Activated naive CD4-positive, alpha-beta T cell treated with anti-CD3 and anti-CD28 coated beads for 36 hours (primary cell): ENCODE measurements at regions of chr16 and their contacts with region 1.

Region 1: GRCh38 chr16:72093448-72094265 is at the starts of genes DHX38 and TXNL4B:
- DNase-seq: peak; percentile 96
- H3K4me3 Mint-ChIP-seq: peak within 1 kb of the TSS; percentile 96
- H3K27ac Mint-ChIP-seq: peak within 1 kb of the TSS; percentile 95
- H3K4me1 Mint-ChIP-seq: peaks cover 35% of the 10 kb centered on the region
- H3K27me3 Mint-ChIP-seq: no peaks in the 10 kb centered on the region
- total RNA-seq, gene DHX38: 78.6 to 79.9 TPM
- total RNA-seq, gene TXNL4B: 22.0 to 24.1 TPM

Region 2: DNA sequence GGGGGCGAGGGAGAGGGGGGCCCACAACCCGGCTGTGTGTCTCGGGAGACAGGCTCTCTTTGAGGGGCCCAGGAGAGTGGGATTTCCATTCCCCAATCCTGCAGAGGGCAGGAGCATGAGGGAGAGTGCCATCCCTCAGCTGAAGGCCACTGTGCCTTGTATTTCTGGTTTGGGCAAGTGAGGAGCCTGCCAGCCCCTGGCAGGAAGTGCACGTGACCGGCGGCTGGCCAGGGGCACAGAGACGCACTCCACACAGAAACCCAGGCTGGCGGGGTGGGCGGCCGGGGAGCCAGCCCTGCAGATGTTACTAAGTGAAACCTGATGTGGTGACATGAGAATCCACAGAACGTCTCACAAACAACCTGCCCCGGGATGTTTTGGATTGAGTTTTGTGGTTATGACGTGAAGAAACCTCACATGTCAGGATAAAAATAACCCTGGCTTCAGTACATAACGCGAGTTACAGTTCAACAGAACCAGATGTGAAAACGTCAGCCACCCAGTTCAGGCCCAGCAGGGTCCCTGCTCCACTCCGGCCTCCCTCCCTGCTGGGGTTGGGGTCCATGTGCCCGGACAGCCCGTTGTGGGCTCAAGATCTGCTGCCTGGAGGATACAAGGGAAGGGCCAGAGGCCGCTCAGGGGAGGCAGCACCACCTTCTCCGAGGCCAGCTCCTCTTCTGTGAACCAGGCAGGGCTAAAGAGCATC is 1356.1 kb before region 1 on chr16:
- CTCF ChIA-PET with region 1: no interaction called
- intact Hi-C with region 1: loop called (anchors 10 kb)
- DNase-seq: peak; percentile 87
- H3K4me3 Mint-ChIP-seq: peak overlapping the region; percentile 55
- H3K27ac Mint-ChIP-seq: peak overlapping the region; percentile 93
- H3K4me1 Mint-ChIP-seq: peaks cover 66% of the 10 kb centered on the region
- H3K27me3 Mint-ChIP-seq: no peaks in the 10 kb centered on the region

Region 3: GRCh38 chr16:71484006-71484893 is 609.4 kb before region 1 on chr16:
- CTCF ChIA-PET with region 1: no interaction called
- intact Hi-C with region 1: loop called (anchors 5 kb)
- DNase-seq: peak; percentile 90
- H3K4me3 Mint-ChIP-seq: peak overlapping the region; percentile 74
- H3K27ac Mint-ChIP-seq: peak overlapping the region; percentile 79
- H3K4me1 Mint-ChIP-seq: peaks cover 13% of the 10 kb centered on the region
- H3K27me3 Mint-ChIP-seq: no peaks in the 10 kb centered on the region

Region 4: DNA sequence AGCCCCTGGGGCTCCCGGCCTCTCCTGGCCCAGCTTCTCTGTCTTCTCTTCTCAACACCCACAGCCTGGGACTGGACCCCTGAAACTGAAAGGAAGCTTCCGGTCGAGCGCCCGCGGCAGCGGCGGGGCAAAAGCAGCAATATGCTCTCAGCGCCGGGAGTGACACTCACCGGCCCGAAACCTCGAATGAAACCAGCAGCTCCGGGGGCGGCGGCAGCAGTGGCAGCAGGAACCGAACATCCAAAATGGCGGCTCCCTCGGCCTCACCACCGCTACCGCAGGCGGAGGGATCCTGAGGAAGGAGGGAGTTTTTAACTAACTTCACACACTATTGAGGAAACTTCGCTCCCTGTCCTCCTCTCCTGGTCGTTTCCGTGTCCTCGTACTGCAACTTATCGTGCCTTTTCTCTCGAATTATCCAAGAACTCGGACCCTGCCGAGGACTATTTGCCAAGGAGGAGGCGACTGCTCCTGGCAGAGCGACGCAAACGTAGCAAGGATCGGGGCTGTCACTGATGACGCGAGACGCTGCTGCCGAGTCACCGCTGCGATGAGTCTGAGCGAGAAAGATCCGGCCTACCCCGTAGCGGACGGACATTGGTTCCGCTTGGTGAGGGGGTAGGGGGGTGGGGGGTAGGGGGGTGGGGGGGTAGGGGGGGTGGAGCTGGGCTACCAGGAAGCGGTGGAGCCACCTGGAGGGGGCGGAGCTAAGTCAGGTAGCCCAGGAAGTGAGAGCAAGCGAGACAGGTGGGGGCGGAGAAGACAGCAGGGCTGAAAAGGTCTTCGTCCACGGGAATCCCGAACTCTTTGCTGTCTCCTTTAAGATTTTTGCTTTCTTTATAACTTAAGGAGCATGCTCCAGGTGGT is 284.8 kb before region 1 on chr16 and contains the start of gene AP1G1:
- CTCF ChIA-PET with region 1: no interaction called
- intact Hi-C with region 1: loop called (anchors 2 kb)
- DNase-seq: peak; percentile 97
- H3K4me3 Mint-ChIP-seq: peak within 1 kb of the TSS; percentile 90
- H3K27ac Mint-ChIP-seq: peak within 1 kb of the TSS; percentile 100
- H3K4me1 Mint-ChIP-seq: peaks cover 42% of the 10 kb centered on the region
- H3K27me3 Mint-ChIP-seq: no peaks in the 10 kb centered on the region
- total RNA-seq, gene AP1G1: 56.4 to 59.3 TPM

Region 5: GRCh38 chr16:71894921-71895678 is 198.6 kb before region 1 on chr16 and contains the start of gene IST1:
- CTCF ChIA-PET with region 1: no interaction called
- intact Hi-C with region 1: loop called (anchors 1 kb)
- DNase-seq: peak; percentile 99
- H3K4me3 Mint-ChIP-seq: peak within 1 kb of the TSS; percentile 97
- H3K27ac Mint-ChIP-seq: peak within 1 kb of the TSS; percentile 96
- H3K4me1 Mint-ChIP-seq: peaks cover 33% of the 10 kb centered on the region
- H3K27me3 Mint-ChIP-seq: no peaks in the 10 kb centered on the region
- total RNA-seq, gene IST1: 196 to 203 TPM

Region 6: DNA sequence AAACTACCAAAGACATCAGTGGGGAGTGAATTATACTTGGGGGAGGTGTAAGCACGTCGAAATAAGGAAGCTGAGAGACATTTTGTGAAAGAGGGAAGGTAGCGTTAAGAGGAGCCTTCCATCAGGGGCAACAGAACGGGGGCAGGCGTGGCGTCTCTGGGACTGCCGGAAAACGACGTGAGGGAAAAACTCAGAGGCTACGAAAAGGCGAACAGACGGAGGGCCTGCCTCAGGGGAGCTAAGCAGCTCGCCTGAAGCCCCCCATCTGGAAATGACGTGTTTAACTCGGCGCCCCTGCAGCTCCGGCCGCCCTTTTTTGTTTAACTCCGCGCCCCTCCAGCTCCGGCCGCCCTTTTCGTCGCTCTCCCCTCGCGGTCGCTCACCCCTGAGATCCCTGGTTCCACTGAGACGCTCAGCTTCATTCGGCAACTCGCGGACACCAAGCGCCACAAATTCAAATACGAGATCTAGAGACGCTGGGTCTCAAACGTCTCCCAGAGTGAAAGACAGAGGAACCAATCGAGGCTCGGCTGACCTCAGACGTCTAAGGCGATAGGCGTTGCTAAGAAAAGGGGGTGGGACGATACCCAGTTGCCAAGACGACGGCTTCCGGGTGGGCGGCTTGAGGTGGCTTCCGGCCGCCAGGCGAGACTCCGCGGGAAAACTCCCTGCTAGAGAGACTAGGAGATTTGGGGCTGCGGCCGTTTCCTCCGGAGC is 571.0 kb after region 1 on chr16:
- CTCF ChIA-PET with region 1: no interaction called
- intact Hi-C with region 1: loop called (anchors 1 kb)
- DNase-seq: peak; percentile 98
- H3K4me3 Mint-ChIP-seq: peak overlapping the region; percentile 100
- H3K27ac Mint-ChIP-seq: peak overlapping the region; percentile 95
- H3K4me1 Mint-ChIP-seq: peaks cover 9% of the 10 kb centered on the region
- H3K27me3 Mint-ChIP-seq: no peaks in the 10 kb centered on the region